ENCODE measurements at regions of chr1 and their contacts with region 1.

Region 1: GRCh38 chr1:227563324-227564201 is at the start of gene ZNF678:
- DNase-seq: peak; percentile 94
- H3K4me3 Mint-ChIP-seq: peak within 1 kb of the TSS; percentile 95
- H3K27ac Mint-ChIP-seq: peak within 1 kb of the TSS; percentile 90
- H3K4me1 Mint-ChIP-seq: peaks cover 14% of the 10 kb centered on the region
- H3K27me3 Mint-ChIP-seq: peaks cover 23% of the 10 kb centered on the region
- total RNA-seq, gene ZNF678: 4.7 and 6.0 TPM in 2 replicates

Region 2: GRCh38 chr1:227542143-227543120 is 21.1 kb before region 1 on chr1:
- intact Hi-C with region 1: loop called (anchors 1 kb)
- DNase-seq: peak; percentile 97
- H3K4me3 Mint-ChIP-seq: peak overlapping the region; percentile 48
- H3K27ac Mint-ChIP-seq: peak overlapping the region; percentile 67
- H3K4me1 Mint-ChIP-seq: peaks cover 5% of the 10 kb centered on the region
- H3K27me3 Mint-ChIP-seq: peaks cover 5% of the 10 kb centered on the region

Region 3: GRCh38 chr1:227728059-227728891 is 164.7 kb after region 1 on chr1:
- intact Hi-C with region 1: loop called (anchors 1 kb)
- DNase-seq: peak; percentile 80
- H3K4me3 Mint-ChIP-seq: peak overlapping the region; percentile 87
- H3K27ac Mint-ChIP-seq: peak overlapping the region; percentile 71
- H3K4me1 Mint-ChIP-seq: peaks cover 17% of the 10 kb centered on the region
- H3K27me3 Mint-ChIP-seq: peaks cover 2% of the 10 kb centered on the region